H1 (cell line): ENCODE measurements at regions of chr1 and their contacts with region 1.

Region 1: GRCh38 chr1:53945433-53946251 is at the start of gene IFT25:
- DNase-seq: peak; percentile 73 to 100
- H3K4me3 ChIP-seq: peak within 1 kb of the TSS; percentile 77 to 98 (median 79)
- H3K27ac ChIP-seq: peak within 1 kb of the TSS; percentile 49; the same call in 1 of the 2 replicates
- H3K4me1 ChIP-seq: peaks cover 4 to 18% (median 10%) of the 10 kb centered on the region in 4 experiments
- H3K27me3 ChIP-seq: no peaks in the 10 kb centered on the region
- CTCF ChIP-seq: no peak
- EP300 ChIP-seq: no peak
- POLR2A ChIP-seq: no peak; a peak in 1 of 3 replicates
- RAD21 ChIP-seq: no peak
- total RNA-seq, gene IFT25: 29.7 and 36.3 TPM in 2 replicates

Region 2: DNA sequence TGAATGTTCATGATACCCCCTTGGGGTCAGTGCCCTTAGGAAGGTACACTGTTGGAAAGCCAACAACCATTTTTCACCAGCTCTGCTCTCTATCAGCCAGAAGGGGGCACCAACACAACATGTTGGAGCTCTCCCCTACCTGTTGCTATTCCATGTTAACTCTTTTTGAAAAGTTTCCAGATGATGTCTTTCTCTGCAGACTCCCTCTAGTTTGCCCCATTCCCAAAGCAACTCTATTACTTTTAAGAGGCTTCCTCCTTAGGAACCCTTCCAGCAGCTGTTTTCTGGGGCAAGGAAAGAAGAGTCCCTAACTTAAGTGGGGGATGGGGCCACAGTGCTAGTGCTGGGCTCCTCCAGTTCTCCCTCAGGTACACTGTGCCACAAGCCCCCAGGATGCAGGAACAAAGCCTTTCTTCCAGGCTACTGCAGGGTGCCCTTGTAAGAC is 84.7 kb before region 1 on chr1:
- CTCF ChIA-PET with region 1: interaction called, 123 read pairs
- POLR2A ChIA-PET with region 1: interaction called, 7 read pairs
- DNase-seq: peak in 1 of 2 experiments; percentile 58
- H3K4me3 ChIP-seq: no peak overlapping the region; a peak in 1 of 8 replicates
- H3K27ac ChIP-seq: no peak overlapping the region
- H3K4me1 ChIP-seq: peaks cover 0 to 3% (median 0%) of the 10 kb centered on the region in 4 experiments; a peak in 1 of 7 replicates
- H3K27me3 ChIP-seq: no peaks in the 10 kb centered on the region
- CTCF ChIP-seq: peak; percentile 46 to 93 (median 85)
- EP300 ChIP-seq: no peak
- POLR2A ChIP-seq: no peak
- RAD21 ChIP-seq: peak; percentile 91 to 92

Region 3: DNA sequence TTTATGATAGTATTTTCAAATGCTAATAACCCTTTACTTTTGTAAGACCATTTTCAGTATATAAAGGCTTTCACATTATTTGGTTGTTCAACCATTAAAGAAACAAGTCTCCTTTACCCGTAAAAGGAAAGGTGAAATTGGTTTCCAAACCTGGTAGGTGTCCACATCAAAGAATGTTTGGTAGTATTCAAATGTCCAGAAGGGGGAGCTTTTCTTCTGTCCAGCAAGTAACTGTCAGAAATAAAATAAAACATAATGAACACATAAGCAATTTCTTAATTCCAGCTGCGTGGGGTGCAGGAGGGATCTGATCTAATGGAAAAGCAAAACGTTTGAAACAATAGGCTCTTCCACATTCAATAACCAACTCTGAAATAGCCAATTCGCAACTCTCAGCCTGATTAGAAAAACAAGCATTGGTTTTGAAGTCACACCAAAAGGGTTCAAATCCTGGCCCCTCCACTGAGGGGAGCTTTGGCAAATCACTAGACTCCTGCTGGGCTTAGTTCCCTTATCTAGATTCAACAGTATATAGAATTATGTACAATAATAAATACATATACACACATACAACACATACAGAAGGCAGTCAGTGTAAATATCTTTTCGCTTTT is 67.0 kb before region 1 on chr1:
- CTCF ChIA-PET with region 1: interaction called, 112 read pairs
- POLR2A ChIA-PET with region 1: interaction called, 4 read pairs
- DNase-seq: no peak
- H3K4me3 ChIP-seq: no peak overlapping the region
- H3K27ac ChIP-seq: no peak overlapping the region
- H3K4me1 ChIP-seq: no peaks in the 10 kb centered on the region
- H3K27me3 ChIP-seq: no peaks in the 10 kb centered on the region
- CTCF ChIP-seq: peak in 2 of 3 experiments; percentile 41 to 56; a peak in 2 of 4 replicates
- EP300 ChIP-seq: no peak
- POLR2A ChIP-seq: no peak
- RAD21 ChIP-seq: peak; percentile 53 to 55

Region 4: DNA sequence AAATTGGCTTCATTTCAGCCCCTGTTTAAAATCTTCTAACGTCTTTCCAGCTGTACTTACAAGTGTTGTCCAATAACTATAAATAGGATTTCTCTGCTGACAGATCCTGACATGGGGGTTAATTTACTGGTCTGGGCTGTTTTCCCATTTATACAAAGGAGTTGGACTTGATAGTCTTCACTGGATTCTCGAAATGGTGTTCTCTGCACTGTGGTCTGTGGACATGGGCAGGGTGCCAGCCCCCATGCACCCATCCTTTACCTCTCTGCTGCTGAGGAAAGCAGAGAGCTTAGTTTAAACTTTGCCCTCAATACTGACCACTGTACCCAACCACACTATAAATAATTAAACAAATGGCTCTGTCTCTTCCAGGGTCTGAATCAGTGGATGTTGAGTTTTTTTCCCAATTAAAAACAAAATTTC is 46.4 kb before region 1 on chr1:
- CTCF ChIA-PET with region 1: interaction called, 11 read pairs
- POLR2A ChIA-PET with region 1: interaction called, 3 read pairs
- DNase-seq: no peak
- H3K4me3 ChIP-seq: no peak overlapping the region
- H3K27ac ChIP-seq: no peak overlapping the region
- H3K4me1 ChIP-seq: peaks cover 0 to 2% (median 0%) of the 10 kb centered on the region in 4 experiments; a peak in 1 of 7 replicates
- H3K27me3 ChIP-seq: no peaks in the 10 kb centered on the region
- CTCF ChIP-seq: no peak
- EP300 ChIP-seq: no peak
- POLR2A ChIP-seq: no peak
- RAD21 ChIP-seq: no peak

Region 5: GRCh38 chr1:53919675-53920066 is 26.0 kb before region 1 on chr1:
- CTCF ChIA-PET with region 1: interaction called, 32 read pairs
- POLR2A ChIA-PET with region 1: interaction called, 6 read pairs
- DNase-seq: no peak
- H3K4me3 ChIP-seq: no peak overlapping the region
- H3K27ac ChIP-seq: no peak overlapping the region
- H3K4me1 ChIP-seq: 0 out of 7 replicates have a peak, but pooled peaks cover 0 to 2% (median 0%) of the 10 kb centered on the region in 4 experiments
- H3K27me3 ChIP-seq: no peaks in the 10 kb centered on the region
- CTCF ChIP-seq: no peak
- EP300 ChIP-seq: no peak
- POLR2A ChIP-seq: no peak
- RAD21 ChIP-seq: no peak

Region 6: GRCh38 chr1:54287176-54287650 is 341.6 kb after region 1 on chr1:
- CTCF ChIA-PET with region 1: no interaction called
- POLR2A ChIA-PET with region 1: no interaction called
- DNase-seq: peak in 1 of 2 experiments; percentile 52
- H3K4me3 ChIP-seq: no peak overlapping the region
- H3K27ac ChIP-seq: no peak overlapping the region
- H3K4me1 ChIP-seq: peaks cover 8 to 29% (median 25%) of the 10 kb centered on the region in 4 experiments
- H3K27me3 ChIP-seq: no peaks in the 10 kb centered on the region
- CTCF ChIP-seq: no peak
- EP300 ChIP-seq: no peak
- POLR2A ChIP-seq: no peak
- RAD21 ChIP-seq: no peak